Naive thymus-derived CD4-positive, alpha-beta T cell (primary cell): ENCODE measurements at regions of chr7 and their contacts with region 1.

Region 1: DNA sequence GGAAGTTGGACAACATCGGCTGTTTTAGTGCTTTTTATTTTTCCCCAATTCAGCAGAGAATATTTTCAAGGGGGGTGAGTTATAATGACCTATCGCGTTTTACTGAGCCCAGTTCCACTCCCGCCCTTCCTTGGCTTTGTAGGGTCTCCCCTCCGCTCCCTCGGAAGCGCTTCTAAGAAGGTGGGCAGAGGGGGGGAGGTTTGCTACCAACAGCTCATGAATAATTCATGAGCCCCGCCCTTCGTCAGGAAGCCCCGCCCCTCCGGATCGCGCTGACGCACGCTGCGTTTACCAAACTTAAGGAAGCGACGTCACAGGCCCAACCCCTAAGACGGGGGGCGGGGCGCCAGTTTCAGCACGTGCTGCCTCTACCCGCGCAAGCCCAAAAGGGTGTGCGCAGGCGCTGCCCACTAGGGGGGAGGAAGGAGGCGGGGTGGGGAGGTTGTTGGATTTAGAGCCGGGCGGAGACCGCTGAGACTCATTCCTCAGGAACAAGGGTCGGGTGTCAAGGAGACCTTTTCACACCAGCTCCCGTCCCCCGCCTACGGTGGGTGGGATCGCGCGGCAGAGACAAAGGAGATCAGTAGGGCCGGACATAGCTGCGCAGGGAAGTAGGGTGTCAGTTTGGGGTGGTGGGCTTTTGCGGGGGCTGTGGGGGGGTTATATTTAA is 529 bp upstream of the MEPCE start:
- DNase-seq: peak; percentile 100
- ATAC-seq: peak; percentile 76
- H3K4me3 ChIP-seq: peak overlapping the region; percentile 88
- H3K4me3 Mint-ChIP-seq: peak overlapping the region; percentile 93 to 100 (median 97)
- H3K27ac ChIP-seq: peak overlapping the region; percentile 97
- H3K27ac Mint-ChIP-seq: peak overlapping the region; percentile 99 to 100 (median 100)
- H3K4me1 ChIP-seq: peaks cover 22 to 29% of the 10 kb centered on the region in 2 donors
- H3K4me1 Mint-ChIP-seq: peaks cover 22 to 56% (median 42%) of the 10 kb centered on the region in 7 donors
- H3K27me3 ChIP-seq: no peaks in the 10 kb centered on the region
- H3K27me3 Mint-ChIP-seq: peaks cover 0 to 24% (median 0%) of the 10 kb centered on the region in 5 donors

Region 2: DNA sequence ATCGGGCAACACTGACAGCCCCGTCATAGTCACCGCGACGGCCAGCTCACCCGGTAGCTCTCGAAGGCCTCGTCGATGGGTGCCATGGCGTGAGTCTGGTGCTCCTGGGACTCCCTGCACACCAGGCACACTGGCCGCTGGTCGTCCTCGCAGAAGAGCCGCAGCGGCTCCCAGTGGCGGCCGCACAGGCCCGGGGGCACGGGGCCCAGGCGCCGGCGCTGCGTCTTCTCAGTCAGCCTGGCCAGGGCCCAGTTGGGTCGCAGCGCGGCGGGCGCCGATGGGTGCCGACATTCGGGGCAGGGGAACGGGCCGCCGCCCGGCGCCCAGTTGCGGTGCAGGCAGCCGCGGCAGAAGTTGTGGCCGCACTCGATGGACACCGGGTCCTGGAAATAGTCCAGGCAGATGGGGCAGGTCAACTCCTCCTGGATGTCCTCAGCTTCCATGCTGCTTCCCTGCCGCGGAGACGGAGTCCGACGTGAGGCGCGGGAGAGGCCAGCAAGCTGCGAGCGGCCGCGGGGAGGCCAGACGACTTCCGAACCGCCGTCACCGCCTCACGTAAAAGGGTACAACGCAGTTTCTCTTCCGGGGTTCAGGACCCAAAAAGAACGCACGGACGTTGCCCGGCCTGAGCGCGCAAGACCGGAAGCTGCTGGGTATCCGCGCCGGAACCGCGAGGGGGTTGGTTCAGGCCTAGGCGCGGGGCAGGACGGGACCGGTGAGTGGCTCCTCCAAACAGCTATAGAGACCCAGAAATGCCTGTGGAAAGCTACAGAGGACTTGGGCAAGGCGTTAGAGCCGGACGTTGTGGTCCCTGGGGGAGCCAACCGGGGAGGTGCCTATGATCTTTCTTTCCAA is 509.9 kb before region 1 on chr7 and contains the start of gene TRIM4:
- CTCF ChIA-PET with region 1: no interaction called
- POLR2A ChIA-PET with region 1: interaction called, 5 read pairs
- intact Hi-C with region 1: loop called in 1 of 2 experiments (anchors 1 kb)
- DNase-seq: peak; percentile 76 to 92 (median 89)
- ATAC-seq: peak; percentile 98
- H3K4me3 ChIP-seq: peak within 1 kb of the TSS; percentile 68
- H3K4me3 Mint-ChIP-seq: peak within 1 kb of the TSS; percentile 87 to 98 (median 96)
- H3K27ac ChIP-seq: peak within 1 kb of the TSS; percentile 96
- H3K27ac Mint-ChIP-seq: peak within 1 kb of the TSS; percentile 96 to 99 (median 98)
- H3K4me1 ChIP-seq: peaks cover 36 to 37% of the 10 kb centered on the region in 2 donors
- H3K4me1 Mint-ChIP-seq: peaks cover 28 to 65% (median 54%) of the 10 kb centered on the region in 7 donors
- H3K27me3 ChIP-seq: no peaks in the 10 kb centered on the region
- H3K27me3 Mint-ChIP-seq: peaks cover 0 to 2% (median 0%) of the 10 kb centered on the region in 5 donors
- total RNA-seq, gene TRIM4: 30.1 to 75.0 (median 37.6) TPM

Region 3: GRCh38 chr7:100148559-100149350 is 280.3 kb before region 1 on chr7 and contains the start of gene LAMTOR4:
- CTCF ChIA-PET with region 1: no interaction called
- POLR2A ChIA-PET with region 1: interaction called, 6 read pairs
- intact Hi-C with region 1: loop called (anchors 1 kb)
- DNase-seq: peak; percentile 84 to 99 (median 97)
- ATAC-seq: peak; percentile 98
- H3K4me3 ChIP-seq: peak within 1 kb of the TSS; percentile 97
- H3K4me3 Mint-ChIP-seq: peak within 1 kb of the TSS; percentile 87 to 100 (median 96)
- H3K27ac ChIP-seq: peak within 1 kb of the TSS; percentile 98
- H3K27ac Mint-ChIP-seq: peak within 1 kb of the TSS; percentile 95 to 99 (median 98)
- H3K4me1 ChIP-seq: peaks cover 15 to 19% of the 10 kb centered on the region in 2 donors
- H3K4me1 Mint-ChIP-seq: peaks cover 27 to 45% (median 38%) of the 10 kb centered on the region in 7 donors
- H3K27me3 ChIP-seq: no peaks in the 10 kb centered on the region
- H3K27me3 Mint-ChIP-seq: no peaks in the 10 kb centered on the region
- total RNA-seq, gene LAMTOR4: 132 to 200 (median 173) TPM

Region 4: DNA sequence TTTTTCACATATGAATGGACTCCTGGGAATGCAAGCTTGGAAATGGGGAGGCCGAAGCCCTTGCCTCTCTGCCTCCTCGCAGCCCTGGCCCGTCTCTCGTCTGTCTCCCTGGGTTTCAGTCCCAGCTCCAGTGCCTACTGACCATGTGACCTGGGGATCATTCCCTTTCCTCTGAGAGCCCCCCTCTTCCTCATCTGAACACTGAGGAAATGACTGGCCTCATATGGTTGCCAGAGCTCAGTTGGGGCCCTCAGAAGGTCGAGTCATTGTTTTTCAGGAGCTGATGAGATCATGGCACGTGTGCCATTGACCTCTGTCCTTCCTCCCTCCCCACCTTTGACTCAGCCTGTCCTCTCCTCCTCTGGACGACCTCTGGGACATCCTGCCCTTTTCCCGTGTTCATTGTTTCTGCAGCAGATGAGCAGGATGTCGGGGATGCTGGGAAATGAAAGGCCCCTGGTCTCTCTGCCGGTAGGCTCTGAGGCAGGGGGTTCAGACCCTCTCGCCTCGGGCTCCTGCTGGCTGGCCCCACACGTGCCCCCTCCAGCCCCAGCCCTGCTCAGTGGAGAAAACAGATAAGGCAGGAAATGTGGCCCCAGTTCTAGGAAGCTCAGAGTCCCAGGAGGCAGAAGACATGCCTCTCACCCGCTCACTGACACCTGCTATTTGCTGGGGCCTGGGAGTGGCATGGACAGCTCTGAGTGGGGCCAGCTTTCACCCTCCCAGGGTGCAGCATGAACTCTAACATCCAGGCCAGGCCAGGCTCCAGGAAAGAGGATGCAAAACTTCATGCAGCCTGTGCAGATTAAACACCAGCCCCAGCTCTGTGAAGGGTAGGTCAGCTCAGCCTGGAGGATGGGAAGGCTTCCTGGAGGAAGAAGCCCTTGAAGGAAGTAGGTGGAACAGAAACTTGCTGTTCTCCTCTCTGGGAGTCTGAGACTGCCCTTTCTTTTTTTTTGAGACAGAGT is 15.5 kb after region 1 on chr7:
- CTCF ChIA-PET with region 1: interaction called, 3 read pairs
- POLR2A ChIA-PET with region 1: interaction called, 71 read pairs
- intact Hi-C with region 1: no loop called
- DNase-seq: no peak
- ATAC-seq: peak; percentile 86
- H3K4me3 ChIP-seq: no peak overlapping the region
- H3K4me3 Mint-ChIP-seq: peak overlapping the region in 1 of 10 donors; percentile 44
- H3K27ac ChIP-seq: peak overlapping the region; percentile 46
- H3K27ac Mint-ChIP-seq: peak overlapping the region in 3 of 9 donors; percentile 51 to 82 (median 63)
- H3K4me1 ChIP-seq: peaks cover 0 to 13% of the 10 kb centered on the region in 2 donors
- H3K4me1 Mint-ChIP-seq: peaks cover 0 to 35% (median 13%) of the 10 kb centered on the region in 7 donors
- H3K27me3 ChIP-seq: no peaks in the 10 kb centered on the region
- H3K27me3 Mint-ChIP-seq: no peaks in the 10 kb centered on the region

Region 5: DNA sequence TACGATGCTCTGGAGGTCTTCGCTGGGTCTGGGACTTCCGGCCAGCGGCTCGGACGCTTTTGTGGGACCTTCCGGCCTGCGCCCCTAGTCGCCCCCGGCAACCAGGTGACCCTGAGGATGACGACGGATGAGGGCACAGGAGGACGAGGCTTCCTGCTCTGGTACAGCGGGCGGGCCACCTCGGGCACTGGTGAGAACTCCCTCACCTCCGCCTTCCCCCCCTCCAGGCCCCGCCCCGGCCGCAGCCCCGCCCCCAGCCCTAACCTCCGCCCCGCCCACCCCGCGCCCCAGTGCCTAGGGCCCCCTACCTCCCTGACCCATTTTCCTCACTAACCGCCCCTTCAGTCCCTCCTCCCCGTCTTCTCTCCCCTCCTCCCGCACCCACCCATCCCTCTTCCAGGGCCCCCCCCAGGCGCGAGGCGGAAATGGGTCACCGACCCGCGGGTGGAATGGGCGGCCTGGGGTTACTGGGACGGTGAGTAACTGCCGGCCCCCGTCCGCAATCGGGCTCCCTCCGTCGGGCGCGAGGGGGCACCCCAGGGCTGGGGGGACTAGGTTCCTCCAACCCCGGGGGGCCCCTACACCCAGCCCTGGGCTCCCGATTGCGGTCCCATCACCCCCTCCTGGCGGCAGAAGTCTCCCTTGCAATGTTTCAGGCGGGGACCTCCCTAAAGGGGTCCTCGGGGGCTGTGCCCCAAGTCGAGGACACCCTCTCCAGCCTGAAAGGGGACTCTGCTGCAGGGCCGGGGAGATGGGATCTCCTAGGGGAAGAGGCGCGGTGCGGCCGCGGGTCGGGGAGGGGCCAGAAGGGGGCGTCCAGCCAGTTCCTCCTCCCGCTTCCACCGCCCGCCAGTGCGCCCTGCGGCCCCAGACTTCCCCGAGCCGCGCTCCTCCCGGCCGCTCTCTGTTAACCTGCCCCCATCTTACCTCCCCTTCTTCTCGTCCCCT is 175.2 kb after region 1 on chr7:
- CTCF ChIA-PET with region 1: no interaction called
- POLR2A ChIA-PET with region 1: no interaction called
- intact Hi-C with region 1: loop called in 1 of 2 experiments (anchors 2 kb)
- DNase-seq: peak in 8 of 9 donors; percentile 47 to 81 (median 59)
- ATAC-seq: peak; percentile 81
- H3K4me3 ChIP-seq: peak overlapping the region; percentile 70
- H3K4me3 Mint-ChIP-seq: peak overlapping the region; percentile 79 to 94 (median 87)
- H3K27ac ChIP-seq: peak overlapping the region; percentile 67
- H3K27ac Mint-ChIP-seq: peak overlapping the region; percentile 21 to 92 (median 84)
- H3K4me1 ChIP-seq: peaks cover 6 to 10% of the 10 kb centered on the region in 2 donors
- H3K4me1 Mint-ChIP-seq: peaks cover 7 to 35% (median 16%) of the 10 kb centered on the region in 7 donors
- H3K27me3 ChIP-seq: no peaks in the 10 kb centered on the region
- H3K27me3 Mint-ChIP-seq: peaks cover 0 to 15% (median 0%) of the 10 kb centered on the region in 5 donors

Region 6: DNA sequence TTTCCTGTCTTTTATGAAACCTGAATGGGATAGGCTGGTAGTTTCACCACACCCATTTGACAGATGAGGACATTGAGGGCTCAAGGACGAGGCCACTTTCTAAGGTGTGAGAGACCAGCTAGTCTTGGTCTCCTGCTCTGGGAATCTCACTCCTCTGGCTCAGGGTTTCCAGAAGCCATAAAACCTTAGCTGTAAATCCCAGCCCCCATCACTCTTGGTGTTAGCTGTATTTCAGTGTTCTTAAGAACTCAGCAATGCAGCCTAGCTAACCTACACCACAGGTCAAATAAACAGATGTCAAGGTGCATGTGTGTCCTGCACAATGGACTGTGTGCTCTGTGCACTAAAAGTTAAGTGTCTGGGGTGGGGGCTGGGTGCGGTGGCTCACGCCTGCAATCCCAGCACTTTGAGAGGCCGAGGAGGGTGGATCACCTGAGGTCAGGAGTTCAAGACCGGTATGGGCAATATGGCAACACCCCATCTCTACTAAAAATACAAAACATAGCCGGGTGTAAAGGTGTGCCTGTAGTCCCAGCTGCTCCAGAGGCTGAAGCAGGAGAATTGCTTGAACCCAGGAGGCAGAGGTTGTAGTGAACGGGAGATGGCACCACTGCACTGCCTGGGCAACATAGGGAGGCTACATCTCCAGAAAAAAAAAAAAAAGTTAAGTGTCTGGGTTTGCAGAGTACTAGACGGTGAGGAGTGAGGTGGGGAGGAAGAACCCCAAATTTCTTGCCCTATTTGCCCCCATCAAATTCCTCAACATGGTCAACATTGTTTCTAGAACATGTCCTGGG is 290.6 kb after region 1 on chr7:
- CTCF ChIA-PET with region 1: no interaction called
- POLR2A ChIA-PET with region 1: no interaction called
- intact Hi-C with region 1: no loop called
- DNase-seq: no peak
- ATAC-seq: no peak
- H3K4me3 ChIP-seq: no peak overlapping the region
- H3K4me3 Mint-ChIP-seq: peak overlapping the region in 2 of 10 donors; percentile 14 to 70
- H3K27ac ChIP-seq: no peak overlapping the region
- H3K27ac Mint-ChIP-seq: no peak overlapping the region
- H3K4me1 ChIP-seq: no peaks in the 10 kb centered on the region
- H3K4me1 Mint-ChIP-seq: peaks cover 0 to 5% (median 2%) of the 10 kb centered on the region in 7 donors
- H3K27me3 ChIP-seq: peaks cover 0 to 9% of the 10 kb centered on the region in 2 donors
- H3K27me3 Mint-ChIP-seq: peaks cover 44 to 51% (median 45%) of the 10 kb centered on the region in 5 donors

Region 7: DNA sequence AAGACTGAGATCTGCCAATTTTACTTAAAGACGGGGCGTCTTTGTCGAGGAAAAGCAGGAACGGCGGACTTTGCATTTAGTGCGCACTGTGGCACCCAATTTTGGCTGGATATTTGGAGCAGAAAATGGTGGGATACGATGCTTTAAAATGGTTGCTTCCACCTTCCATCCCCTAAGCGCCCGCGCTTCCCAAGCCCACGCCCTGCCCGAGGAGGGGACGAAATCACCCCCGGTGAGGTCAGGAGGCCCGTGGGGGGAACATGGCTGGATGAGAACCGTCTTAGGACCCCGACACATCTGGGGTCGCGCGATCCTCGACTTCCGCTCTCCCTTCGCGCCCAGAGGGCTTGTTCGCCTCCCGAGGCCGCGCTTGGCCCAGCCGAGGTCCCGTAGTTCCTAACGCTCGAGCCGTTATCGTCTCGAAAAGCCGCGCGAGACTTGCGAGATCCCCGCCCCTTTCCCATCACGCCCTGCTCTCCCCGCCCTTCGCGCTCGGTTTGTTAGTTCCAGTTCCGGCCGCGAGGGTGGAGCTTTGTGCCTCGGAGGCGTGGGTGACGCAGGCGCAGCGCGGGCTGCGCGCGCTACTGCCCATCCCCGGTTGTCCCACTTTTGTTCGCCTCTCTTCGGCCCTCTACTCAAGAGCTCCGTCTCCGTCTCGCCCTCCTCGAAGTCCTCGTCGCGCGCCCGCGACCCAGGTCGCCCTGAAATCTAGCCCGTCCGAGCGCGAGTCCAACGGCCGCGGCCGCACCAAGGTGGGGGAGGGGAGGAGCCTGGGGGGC is 445.7 kb after region 1 on chr7 and contains the start of gene SRRT:
- CTCF ChIA-PET with region 1: no interaction called
- POLR2A ChIA-PET with region 1: interaction called, 8 read pairs
- intact Hi-C with region 1: loop called (anchors 1 kb)
- DNase-seq: peak; percentile 92 to 99 (median 97)
- ATAC-seq: peak; percentile 98
- H3K4me3 ChIP-seq: peak within 1 kb of the TSS; percentile 78
- H3K4me3 Mint-ChIP-seq: peak within 1 kb of the TSS; percentile 96 to 100 (median 98)
- H3K27ac ChIP-seq: peak within 1 kb of the TSS; percentile 94
- H3K27ac Mint-ChIP-seq: peak within 1 kb of the TSS; percentile 97 to 99 (median 98)
- H3K4me1 ChIP-seq: peaks cover 22 to 30% of the 10 kb centered on the region in 2 donors
- H3K4me1 Mint-ChIP-seq: peaks cover 27 to 55% (median 52%) of the 10 kb centered on the region in 7 donors
- H3K27me3 ChIP-seq: no peaks in the 10 kb centered on the region
- H3K27me3 Mint-ChIP-seq: no peaks in the 10 kb centered on the region
- total RNA-seq, gene SRRT: 212 to 271 (median 261) TPM